Calu3 (cell line): ENCODE measurements at regions of chr22 and their contacts with region 1.

Region 1: DNA sequence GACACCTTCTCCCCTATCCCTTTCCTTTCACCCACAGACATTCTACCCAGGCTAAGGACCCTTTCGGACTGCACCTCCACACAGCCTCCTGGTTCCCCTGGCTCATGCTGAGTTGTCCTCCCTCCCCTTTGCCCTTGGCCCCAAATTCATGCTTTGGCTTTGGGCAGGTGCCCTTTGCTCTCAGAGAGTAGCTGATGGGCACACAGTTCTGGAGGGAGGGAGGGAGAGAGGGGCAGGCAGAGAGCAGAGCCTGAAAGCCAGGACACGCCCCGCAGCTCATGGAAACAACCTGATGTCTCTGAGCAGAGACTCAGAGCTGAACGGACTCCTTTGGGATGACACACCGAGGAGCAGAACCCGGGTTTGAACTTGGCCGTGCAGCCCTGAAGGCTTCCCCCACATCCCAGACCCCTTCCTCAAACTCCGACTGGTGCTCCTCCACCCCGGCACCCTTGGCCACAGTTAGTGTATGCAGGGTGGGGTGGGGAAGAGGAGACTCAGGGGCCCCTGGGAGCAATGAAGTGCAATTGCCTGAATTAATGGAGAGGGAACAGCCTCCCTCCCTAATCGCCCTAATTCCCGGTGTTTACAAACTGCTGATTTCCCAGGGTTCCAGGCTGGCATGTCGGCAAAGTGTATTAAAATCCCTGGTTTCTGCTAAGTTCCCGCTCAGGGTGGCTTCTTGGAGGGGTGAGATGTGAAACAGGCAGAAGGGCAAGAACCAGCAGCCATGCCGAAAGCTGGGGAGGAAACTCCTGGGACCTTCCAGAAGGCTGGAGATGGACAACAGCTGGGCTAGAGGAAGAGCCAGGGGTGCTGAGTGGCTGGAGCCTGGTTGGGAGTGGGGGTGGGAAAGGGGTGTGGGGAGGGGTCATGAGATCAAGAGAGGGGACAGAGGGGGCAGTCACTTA is 71.2 kb upstream of the SHISAL1 start:
- DNase-seq: no peak
- H3K4me3 Mint-ChIP-seq: no peak overlapping the region
- H3K27ac Mint-ChIP-seq: no peak overlapping the region
- H3K4me1 Mint-ChIP-seq: no peaks in the 10 kb centered on the region
- H3K27me3 Mint-ChIP-seq: peaks cover 100% of the 10 kb centered on the region
- CTCF ChIP-seq: no peak

Region 2: GRCh38 chr22:44192098-44192810 is 191.7 kb before region 1 on chr22:
- CTCF ChIA-PET with region 1: no interaction called
- intact Hi-C with region 1: no loop called
- DNase-seq: peak; percentile 49
- H3K4me3 Mint-ChIP-seq: no peak overlapping the region
- H3K27ac Mint-ChIP-seq: no peak overlapping the region
- H3K4me1 Mint-ChIP-seq: peaks cover 14% of the 10 kb centered on the region
- H3K27me3 Mint-ChIP-seq: peaks cover 89% of the 10 kb centered on the region
- CTCF ChIP-seq: no peak

Region 3: GRCh38 chr22:44566911-44567310 is 183.0 kb after region 1 on chr22:
- CTCF ChIA-PET with region 1: interaction called, 10 read pairs
- intact Hi-C with region 1: no loop called
- DNase-seq: no peak
- H3K4me3 Mint-ChIP-seq: no peak overlapping the region
- H3K27ac Mint-ChIP-seq: no peak overlapping the region
- H3K4me1 Mint-ChIP-seq: no peaks in the 10 kb centered on the region
- H3K27me3 Mint-ChIP-seq: peaks cover 44% of the 10 kb centered on the region
- CTCF ChIP-seq: no peak